Activated CD4-positive, alpha-beta T cell treated with anti-CD3 and anti-CD28 coated beads for 36 hours (primary cell): ENCODE measurements at regions of chr10 and their contacts with region 1.

Region 1: DNA sequence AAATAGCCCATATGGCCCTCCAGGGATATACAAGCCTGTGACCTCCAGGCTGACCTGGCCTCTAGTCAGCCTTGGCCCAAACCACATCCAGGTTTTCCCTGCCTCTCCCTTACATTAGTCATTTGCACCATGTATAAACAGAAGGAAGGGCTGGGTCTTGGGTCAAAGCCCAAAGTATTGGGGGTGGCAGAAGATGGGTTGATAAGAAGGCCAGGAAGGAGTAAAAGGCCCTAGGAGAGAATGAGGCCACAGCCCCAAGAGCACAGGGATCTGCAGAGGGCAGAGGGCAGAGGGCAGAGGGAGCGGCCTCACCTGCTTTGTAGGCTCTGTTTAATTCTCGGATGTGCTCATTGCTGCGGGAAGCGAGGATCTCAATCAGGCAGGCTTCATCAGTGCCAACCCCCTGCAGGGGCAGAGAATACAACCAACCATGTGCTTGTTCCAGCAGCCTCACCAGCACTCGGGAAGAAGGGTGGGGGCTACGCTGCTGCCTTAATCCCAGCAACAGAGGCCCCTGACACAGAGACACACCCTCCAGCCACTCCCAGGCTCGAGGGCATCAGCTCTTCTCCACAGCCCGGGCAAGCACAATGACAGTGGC is 31.3 kb downstream of the PLAC9 start:
- DNase-seq: no peak
- ATAC-seq: no peak
- H3K4me3 Mint-ChIP-seq: no peak overlapping the region
- H3K27ac Mint-ChIP-seq: no peak overlapping the region
- H3K4me1 Mint-ChIP-seq: peaks cover 11% of the 10 kb centered on the region
- H3K27me3 Mint-ChIP-seq: no peaks in the 10 kb centered on the region

Region 2: GRCh38 chr10:80150172-80150571 is 13.7 kb before region 1 on chr10:
- CTCF ChIA-PET with region 1: interaction called, 4 read pairs
- POLR2A ChIA-PET with region 1: no interaction called
- intact Hi-C with region 1: loop called in 1 of 2 experiments (anchors 2 kb)
- DNase-seq: no peak
- ATAC-seq: no peak
- H3K4me3 Mint-ChIP-seq: no peak overlapping the region
- H3K27ac Mint-ChIP-seq: peak overlapping the region; percentile 67
- H3K4me1 Mint-ChIP-seq: no peaks in the 10 kb centered on the region
- H3K27me3 Mint-ChIP-seq: no peaks in the 10 kb centered on the region